Lower leg skin (tissue), 4 donors: ENCODE measurements at regions of chr19 and their contacts with region 1.

Region 1: DNA sequence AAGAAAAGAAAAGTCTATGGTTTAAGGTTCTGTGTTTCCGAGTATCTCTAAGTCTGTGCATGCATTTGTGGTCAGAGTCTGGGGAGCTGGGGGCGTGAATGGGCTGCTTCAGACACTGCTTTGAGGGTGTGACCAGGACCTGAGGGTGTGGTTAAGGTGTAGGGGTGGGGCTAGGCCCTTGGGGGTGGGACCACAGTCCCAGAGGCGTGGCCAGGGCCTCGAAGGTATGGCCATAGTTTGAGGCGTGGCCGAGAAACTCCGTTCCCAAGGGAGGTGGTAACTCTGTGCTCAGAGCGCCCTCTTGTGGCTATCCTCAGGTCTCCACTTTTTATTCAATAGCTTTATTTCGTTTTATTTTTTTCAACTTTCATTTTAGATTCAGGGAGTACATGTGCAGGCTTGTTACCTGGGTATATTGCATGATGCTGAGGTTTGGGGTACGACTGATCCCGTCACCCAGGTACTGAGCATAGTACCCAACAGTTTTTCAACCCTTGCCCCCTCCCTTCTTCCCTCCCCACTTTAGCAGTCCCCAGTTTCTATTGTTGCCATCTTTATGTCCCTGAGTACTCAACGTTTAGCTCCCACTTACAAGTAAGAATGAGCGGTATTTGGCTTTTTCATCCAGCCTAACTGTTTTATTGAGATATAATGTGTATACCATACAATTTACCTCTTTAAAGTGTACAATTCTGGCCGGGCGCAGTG is 7.0 kb upstream of the CBLC start:
- DNase-seq: peak; percentile 94 to 98
- H3K4me3 ChIP-seq: no peak overlapping the region
- CTCF ChIP-seq: peak in 1 of 3 donors; percentile 89
- POLR2A ChIP-seq: no peak

Region 2: GRCh38 chr19:44623080-44623479 is 147.6 kb before region 1 on chr19:
- intact Hi-C with region 1: no loop called
- DNase-seq: no peak
- H3K4me3 ChIP-seq: no peak overlapping the region
- CTCF ChIP-seq: no peak
- POLR2A ChIP-seq: no peak

Region 3: DNA sequence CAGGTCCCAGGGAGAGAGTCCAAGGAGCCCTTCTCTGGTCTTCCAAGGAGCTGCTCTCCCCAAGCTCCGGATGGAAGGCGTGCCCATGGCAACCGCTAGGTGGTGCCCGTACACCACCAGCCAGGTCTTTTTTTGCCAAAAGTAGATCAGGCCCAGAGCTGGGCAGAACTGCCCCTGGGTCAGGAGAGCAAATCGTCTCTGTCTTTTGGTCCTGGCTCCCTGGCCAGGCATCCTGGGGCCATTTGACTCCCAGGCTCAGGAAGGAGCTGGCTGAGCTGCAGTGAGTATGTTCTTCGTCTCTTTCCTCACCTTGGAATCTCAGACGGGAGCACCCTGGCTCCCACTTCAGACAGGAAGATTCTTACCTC is 46.8 kb before region 1 on chr19:
- intact Hi-C with region 1: loop called (anchors 5 kb)
- DNase-seq: peak; percentile 78 to 96
- H3K4me3 ChIP-seq: no peak overlapping the region
- CTCF ChIP-seq: peak in 2 of 3 donors; percentile 49 to 83
- POLR2A ChIP-seq: no peak

Region 4: DNA sequence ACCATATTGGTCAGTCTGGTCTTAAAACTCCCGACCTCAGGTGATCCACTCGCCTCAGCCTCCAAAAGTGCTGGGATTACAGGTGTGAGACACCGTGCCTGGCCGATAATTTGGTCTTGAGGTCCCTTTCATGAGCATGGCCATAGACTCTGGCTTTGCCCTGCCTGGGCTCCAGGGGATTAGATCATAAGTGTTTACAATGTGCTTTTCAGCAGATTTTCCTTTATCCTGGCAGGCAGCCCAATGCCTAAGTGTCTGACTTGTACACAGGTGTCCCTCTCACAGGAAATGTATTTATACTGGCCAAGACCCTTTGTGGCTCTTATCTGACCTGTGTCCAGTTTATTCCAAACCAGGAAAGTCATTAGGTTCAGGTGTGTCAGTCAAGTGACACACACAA is 54.1 kb after region 1 on chr19:
- intact Hi-C with region 1: no loop called
- DNase-seq: no peak
- H3K4me3 ChIP-seq: no peak overlapping the region
- CTCF ChIP-seq: no peak
- POLR2A ChIP-seq: no peak